ENCODE measurements at regions of chr9 and their contacts with region 1.

Region 1: DNA sequence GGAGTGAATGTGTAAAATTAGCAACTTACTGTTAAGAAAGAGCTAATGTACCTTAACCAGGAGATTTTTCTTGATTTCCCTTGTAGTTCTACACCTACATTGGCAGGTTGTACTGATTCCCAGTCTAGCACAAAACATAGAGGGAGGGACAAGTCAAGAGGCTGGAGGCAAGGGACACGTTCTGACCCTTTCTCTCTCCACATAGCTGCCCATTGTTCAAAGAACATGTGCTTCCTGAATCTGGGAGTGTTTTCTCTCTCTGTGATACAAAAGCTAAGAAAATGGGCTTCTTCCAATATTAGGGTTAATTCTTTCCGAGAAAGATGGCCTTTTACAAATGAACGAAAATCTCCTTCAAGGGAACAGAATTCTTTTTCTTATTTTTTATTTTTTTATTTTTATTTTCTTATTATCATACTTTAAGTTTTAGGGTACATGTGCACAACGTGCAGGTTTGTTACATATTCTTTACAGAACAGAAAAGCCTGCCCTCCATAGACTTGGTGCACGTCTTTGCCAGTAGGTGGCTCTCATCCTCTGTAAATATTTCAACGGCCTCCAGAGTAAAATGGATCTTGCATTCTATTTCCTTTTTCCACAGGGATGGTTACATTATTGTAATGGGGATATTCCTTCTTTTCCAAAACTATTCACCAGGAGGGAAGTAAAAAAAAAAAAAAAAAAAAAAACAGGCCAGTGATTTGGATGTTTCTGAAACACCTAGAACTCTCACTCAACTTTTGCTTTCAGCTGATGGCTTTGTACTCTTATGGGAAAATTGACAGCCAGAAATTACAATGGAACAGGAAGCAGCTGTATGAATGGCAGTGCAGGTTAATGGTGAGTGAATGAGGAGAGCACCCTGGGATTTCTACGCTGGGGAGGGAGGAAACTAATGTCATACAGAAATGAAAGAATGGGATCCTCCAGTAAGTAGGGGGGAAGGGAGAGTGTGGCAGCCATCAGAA is 13.1 kb upstream of the IFNA5 start:
- DNase-seq: peak in 6 of 9 donors; percentile 16 to 39 (median 28)
- ATAC-seq: peak; percentile 84
- H3K4me3 ChIP-seq: no peak overlapping the region
- H3K4me3 Mint-ChIP-seq: no peak overlapping the region
- H3K27ac ChIP-seq: no peak overlapping the region
- H3K27ac Mint-ChIP-seq: peak overlapping the region in 2 of 9 donors; percentile 54
- H3K4me1 ChIP-seq: no peaks in the 10 kb centered on the region
- H3K4me1 Mint-ChIP-seq: peaks cover 4 to 6% (median 5%) of the 10 kb centered on the region in 7 donors
- H3K27me3 ChIP-seq: no peaks in the 10 kb centered on the region
- H3K27me3 Mint-ChIP-seq: peaks cover 0 to 21% (median 0%) of the 10 kb centered on the region in 5 donors

Region 2: DNA sequence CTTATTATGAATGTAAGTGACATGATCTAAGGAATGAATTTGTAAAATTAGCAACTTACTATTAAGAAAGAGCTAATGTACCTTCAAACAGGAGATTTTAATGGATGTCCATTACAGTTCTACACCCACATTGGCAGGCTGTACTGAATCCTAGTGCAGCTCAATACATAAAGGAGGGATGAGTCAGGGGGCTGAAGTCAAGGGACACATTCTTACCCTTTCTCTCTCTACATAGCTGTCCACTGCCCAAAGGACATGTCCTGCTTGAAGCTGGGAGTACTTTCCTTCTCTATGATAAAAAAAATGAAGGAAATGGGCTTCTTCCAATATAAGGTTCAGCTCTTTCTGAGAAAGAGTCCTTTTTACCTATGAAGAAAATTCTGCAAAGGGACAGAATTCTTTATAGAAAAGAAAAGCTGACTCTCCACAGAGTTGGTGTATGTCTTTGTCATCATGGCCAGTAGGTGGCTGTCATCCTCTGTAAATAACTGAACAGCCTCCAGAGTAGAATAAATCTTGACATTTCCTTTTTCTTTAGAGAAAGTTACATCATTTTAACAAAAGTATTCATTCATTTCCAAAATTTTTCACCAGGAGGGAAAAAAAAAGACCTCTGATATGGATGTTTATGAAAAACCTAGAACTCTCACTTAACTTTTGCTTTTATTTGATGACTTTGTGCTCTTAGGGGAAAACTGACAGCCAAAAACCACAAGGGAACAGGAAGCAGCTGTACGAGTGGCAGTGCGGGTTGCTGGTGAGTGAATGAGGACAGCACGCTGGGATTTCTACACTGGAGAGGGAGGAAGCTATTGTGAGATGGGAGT is 65.3 kb before region 1 on chr9:
- CTCF ChIA-PET with region 1: interaction called, 3 read pairs
- POLR2A ChIA-PET with region 1: no interaction called
- intact Hi-C with region 1: loop called (anchors 1 to 5 kb)
- DNase-seq: peak in 5 of 9 donors; percentile 7 to 23 (median 12)
- ATAC-seq: peak; percentile 78
- H3K4me3 ChIP-seq: no peak overlapping the region
- H3K4me3 Mint-ChIP-seq: peak overlapping the region in 6 of 10 donors; percentile 4 to 52 (median 21)
- H3K27ac ChIP-seq: no peak overlapping the region
- H3K27ac Mint-ChIP-seq: no peak overlapping the region
- H3K4me1 ChIP-seq: peaks cover 0 to 3% of the 10 kb centered on the region in 2 donors
- H3K4me1 Mint-ChIP-seq: peaks cover 4 to 14% (median 6%) of the 10 kb centered on the region in 7 donors
- H3K27me3 ChIP-seq: no peaks in the 10 kb centered on the region
- H3K27me3 Mint-ChIP-seq: peaks cover 4 to 60% (median 16%) of the 10 kb centered on the region in 5 donors

Region 3: DNA sequence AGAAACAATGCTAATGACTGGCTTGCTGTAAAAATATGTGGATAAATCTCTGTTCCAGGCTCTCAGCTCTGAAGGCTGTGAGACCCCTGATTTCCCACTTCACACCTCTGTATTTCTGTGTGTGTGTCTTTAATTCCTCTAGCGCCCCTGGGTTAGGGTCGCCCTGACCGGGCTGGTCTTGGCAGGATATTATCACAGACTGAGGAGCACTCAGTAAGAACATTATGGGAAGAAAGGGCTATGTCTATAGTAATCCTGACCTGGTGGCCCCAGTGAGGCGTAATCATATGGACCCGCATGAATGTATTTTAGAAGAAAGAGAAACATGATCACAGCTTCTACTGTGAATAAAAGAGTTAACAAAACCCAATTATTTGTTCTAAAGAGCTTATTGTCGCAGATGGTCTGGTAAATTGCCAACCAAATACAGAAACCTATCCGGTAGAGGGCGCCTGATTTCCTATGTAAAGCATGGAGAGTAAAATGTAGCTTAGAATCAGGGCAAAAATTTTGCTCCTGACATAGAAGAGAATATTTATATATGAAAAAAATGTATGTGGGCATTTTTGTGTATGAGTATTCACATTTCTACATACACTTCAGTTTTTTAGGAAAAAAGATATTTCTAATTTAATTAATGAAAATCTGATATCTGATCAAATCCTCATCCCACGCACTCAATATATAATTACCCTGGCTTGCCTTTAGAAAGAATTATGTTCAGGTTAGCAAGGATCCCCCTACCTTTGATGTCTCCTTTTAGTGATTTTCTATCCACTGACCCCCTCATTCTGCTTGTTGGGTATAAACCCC is 116.2 kb after region 1 on chr9:
- CTCF ChIA-PET with region 1: no interaction called
- POLR2A ChIA-PET with region 1: no interaction called
- intact Hi-C with region 1: loop called in 1 of 2 experiments (anchors 1 kb)
- DNase-seq: peak in 7 of 9 donors; percentile 20 to 60 (median 50)
- ATAC-seq: peak; percentile 62
- H3K4me3 ChIP-seq: no peak overlapping the region
- H3K4me3 Mint-ChIP-seq: no peak overlapping the region
- H3K27ac ChIP-seq: no peak overlapping the region
- H3K27ac Mint-ChIP-seq: no peak overlapping the region
- H3K4me1 ChIP-seq: no peaks in the 10 kb centered on the region
- H3K4me1 Mint-ChIP-seq: no peaks in the 10 kb centered on the region
- H3K27me3 ChIP-seq: no peaks in the 10 kb centered on the region
- H3K27me3 Mint-ChIP-seq: peaks cover 22 to 52% (median 34%) of the 10 kb centered on the region in 5 donors